Activated T-helper 2 cell treated with anti-CD3 and anti-CD28 coated beads, Interferon-gamma antibody, Interleukin-2, Interleukin-4, amounts not matched to agents 10 μg/mL and 5 μg/mL and 100 μg/mL, durations not matched to agents 14 hours and 24 hours and 36 hours (primary cell): ENCODE measurements at regions of chr11 and their contacts with region 1.

Region 1: DNA sequence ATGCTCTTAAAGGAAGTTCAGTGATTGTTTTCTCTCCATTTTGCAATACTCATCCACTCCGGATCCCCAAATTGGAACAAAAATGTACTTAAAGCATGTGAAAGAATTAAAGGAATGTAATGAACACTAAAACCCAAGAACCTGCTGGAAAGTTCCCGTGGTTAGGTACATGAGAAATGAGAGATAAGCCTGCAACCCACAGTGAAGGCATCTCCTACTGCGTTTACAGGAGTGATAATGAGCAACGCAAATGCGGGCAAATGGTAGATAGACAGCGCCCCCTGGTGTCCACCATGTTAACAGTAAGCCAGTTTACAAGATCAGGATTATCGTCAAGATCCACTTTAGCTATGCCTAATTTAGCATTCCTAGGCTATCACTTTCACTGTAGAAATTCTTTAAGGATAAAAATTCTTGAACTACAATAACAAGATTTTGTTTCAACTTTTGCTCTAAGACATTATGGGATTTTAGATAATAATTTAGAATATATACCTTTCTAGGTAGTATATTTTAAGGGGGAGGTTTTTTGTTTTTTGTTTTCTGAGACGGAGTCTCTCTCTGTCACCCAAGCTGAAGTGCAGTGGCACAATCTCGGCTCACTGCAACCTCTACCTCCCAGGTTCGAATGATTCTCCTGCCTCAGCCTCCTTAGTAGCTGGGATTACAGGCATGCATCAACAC is 29.9 kb downstream of the ALG9 start:
- DNase-seq: peak; percentile 69
- H3K4me3 Mint-ChIP-seq: no peak overlapping the region
- H3K27ac Mint-ChIP-seq: no peak overlapping the region
- H3K4me1 Mint-ChIP-seq: peaks cover 10% of the 10 kb centered on the region
- H3K27me3 Mint-ChIP-seq: no peaks in the 10 kb centered on the region

Region 2: DNA sequence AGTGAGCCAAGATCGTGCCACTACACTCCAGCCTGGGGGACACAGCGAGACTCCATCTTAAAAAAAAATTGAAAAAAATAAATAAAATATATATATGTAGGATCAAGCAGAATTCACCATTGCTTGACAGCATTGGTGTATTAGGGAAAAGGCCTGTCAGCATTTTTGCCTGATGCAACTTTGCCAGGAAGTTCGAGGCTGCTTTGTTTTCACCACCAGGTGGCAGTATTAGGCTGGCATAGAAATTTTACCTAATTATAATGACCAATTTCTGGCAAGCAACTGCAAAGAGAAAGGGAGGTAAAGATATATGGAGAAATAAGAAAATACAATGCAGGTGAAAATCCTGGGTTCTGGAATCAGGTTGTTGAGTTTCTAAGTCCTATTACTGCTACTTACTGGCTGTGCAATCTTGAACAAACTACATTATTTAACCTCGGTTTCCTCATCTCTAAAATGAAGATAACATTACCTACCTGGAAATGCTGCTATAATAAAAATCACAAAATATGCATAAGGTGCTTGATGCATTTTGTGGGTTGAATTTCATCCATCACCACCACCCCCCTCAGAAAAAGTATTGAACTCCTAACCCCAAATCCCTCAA is 276.3 kb before region 1 on chr11:
- intact Hi-C with region 1: loop called (anchors 1 kb)
- DNase-seq: peak; percentile 29
- H3K4me3 Mint-ChIP-seq: no peak overlapping the region
- H3K27ac Mint-ChIP-seq: no peak overlapping the region
- H3K4me1 Mint-ChIP-seq: no peaks in the 10 kb centered on the region
- H3K27me3 Mint-ChIP-seq: peaks cover 3% of the 10 kb centered on the region

Region 3: GRCh38 chr11:111586388-111586831 is 255.1 kb before region 1 on chr11:
- intact Hi-C with region 1: loop called (anchors 1 kb)
- DNase-seq: no peak
- H3K4me3 Mint-ChIP-seq: no peak overlapping the region
- H3K27ac Mint-ChIP-seq: no peak overlapping the region
- H3K4me1 Mint-ChIP-seq: peaks cover 2% of the 10 kb centered on the region
- H3K27me3 Mint-ChIP-seq: peaks cover 5% of the 10 kb centered on the region

Region 4: DNA sequence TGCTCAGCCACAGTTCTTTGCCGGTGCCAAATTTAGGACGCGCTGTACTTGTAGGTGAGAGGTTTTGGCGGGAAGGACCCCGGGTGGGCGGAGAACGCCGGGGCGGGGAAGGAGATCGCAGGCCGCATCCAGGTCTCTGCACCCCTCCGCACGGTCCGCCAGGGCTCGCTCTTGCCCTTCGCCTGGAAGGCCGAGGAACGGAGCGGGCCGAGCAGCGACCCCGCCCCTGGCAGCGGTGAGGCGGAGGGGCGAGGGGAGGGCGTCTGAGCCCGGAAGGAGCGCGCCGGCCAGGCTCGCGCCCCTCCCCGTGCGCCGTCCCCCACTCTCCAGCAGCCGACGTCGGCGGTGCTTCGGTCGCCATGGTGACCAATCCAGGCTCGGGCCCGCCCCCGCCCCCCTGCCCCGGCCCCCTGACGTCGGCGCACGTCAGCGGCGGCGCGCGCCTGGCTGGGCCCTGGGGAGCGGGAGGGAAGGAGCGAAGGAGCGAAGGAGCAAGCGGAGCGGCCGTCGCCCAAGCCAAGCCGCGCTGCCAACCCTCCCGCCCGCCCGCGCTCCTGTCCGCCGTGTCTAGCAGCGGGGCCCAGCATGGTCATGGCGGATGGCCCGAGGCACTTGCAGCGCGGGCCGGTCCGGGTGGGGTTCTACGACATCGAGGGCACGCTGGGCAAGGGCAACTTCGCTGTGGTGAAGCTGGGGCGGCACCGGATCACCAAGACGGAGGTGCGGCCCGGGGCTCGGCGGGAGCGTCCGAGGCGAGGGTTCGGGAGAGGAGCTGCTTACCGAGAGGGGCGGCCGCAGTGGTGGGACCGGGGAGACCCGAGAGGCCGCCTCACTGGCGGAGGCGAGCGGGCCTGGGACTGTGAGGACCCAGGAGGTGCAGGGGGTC is 239.3 kb before region 1 on chr11 and contains the start of gene SIK2:
- intact Hi-C with region 1: loop called (anchors 1 kb)
- DNase-seq: peak; percentile 86
- H3K4me3 Mint-ChIP-seq: peak within 1 kb of the TSS; percentile 96
- H3K27ac Mint-ChIP-seq: peak within 1 kb of the TSS; percentile 88
- H3K4me1 Mint-ChIP-seq: peaks cover 31% of the 10 kb centered on the region
- H3K27me3 Mint-ChIP-seq: peaks cover 6% of the 10 kb centered on the region
- total RNA-seq, gene SIK2: 9.9 TPM in 2 replicates